Activated naive CD4-positive, alpha-beta T cell treated with anti-CD3 and anti-CD28 coated beads for 36 hours (primary cell): ENCODE measurements at regions of chr9 and their contacts with region 1.

Region 1: GRCh38 chr9:87950765-87951488 is 23.4 kb downstream of the CDK20 start:
- DNase-seq: no peak
- H3K4me3 Mint-ChIP-seq: no peak overlapping the region
- H3K27ac Mint-ChIP-seq: no peak overlapping the region
- H3K4me1 Mint-ChIP-seq: no peaks in the 10 kb centered on the region
- H3K27me3 Mint-ChIP-seq: peaks cover 32% of the 10 kb centered on the region

Region 2: DNA sequence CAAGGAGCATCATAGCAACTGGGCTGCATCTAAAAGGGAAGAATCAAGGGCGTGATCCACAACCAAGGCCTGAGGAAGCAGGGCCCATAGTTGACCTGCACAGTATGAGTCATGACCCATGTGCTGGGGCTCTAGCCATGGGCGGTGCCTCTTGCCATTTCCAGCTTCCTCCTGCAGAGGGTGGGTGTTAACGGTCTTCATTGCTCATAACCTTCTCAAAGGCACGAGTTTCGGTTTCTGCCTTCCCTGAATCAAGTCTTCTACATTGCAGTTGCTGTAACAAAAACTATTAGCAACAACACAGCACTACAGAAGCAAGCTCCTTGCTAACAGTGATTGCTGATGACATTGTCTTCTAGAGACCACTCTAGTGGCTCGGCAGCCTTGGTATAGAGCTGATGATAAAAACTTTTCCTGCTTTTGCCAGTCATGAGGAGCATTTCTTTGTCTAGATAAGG is 158.1 kb before region 1 on chr9:
- CTCF ChIA-PET with region 1: no interaction called
- intact Hi-C with region 1: no loop called
- DNase-seq: peak; percentile 47
- H3K4me3 Mint-ChIP-seq: no peak overlapping the region
- H3K27ac Mint-ChIP-seq: no peak overlapping the region
- H3K4me1 Mint-ChIP-seq: peaks cover 7% of the 10 kb centered on the region
- H3K27me3 Mint-ChIP-seq: no peaks in the 10 kb centered on the region

Region 3: DNA sequence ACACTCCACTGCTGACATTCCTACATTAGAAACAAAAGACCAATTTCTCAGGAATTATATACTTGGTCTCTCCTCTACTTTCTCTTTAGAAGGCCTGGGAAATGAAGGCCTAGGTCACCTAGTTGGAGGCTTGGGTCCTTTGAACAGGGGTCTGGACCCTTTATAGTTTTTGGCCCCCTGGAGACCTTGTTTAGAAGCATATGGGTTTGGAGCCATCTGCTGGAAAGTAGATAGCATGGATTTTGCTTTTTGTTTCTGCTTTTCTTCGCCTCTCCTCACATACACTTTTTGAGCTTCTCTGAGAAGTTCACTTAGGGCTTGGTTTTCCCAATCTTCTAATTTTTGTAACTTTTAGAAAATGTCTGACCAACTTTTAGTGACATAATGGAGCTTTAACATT is 90.5 kb after region 1 on chr9:
- CTCF ChIA-PET with region 1: interaction called, 4 read pairs
- intact Hi-C with region 1: loop called (anchors 1 kb)
- DNase-seq: no peak
- H3K4me3 Mint-ChIP-seq: no peak overlapping the region
- H3K27ac Mint-ChIP-seq: no peak overlapping the region
- H3K4me1 Mint-ChIP-seq: no peaks in the 10 kb centered on the region
- H3K27me3 Mint-ChIP-seq: peaks cover 5% of the 10 kb centered on the region

Region 4: GRCh38 chr9:88173378-88173999 is 222.6 kb after region 1 on chr9:
- CTCF ChIA-PET with region 1: interaction called, 6 read pairs
- intact Hi-C with region 1: loop called (anchors 2 kb)
- DNase-seq: peak; percentile 75
- H3K4me3 Mint-ChIP-seq: no peak overlapping the region
- H3K27ac Mint-ChIP-seq: no peak overlapping the region
- H3K4me1 Mint-ChIP-seq: peaks cover 4% of the 10 kb centered on the region
- H3K27me3 Mint-ChIP-seq: peaks cover 6% of the 10 kb centered on the region